Activated naive CD4-positive, alpha-beta T cell treated with anti-CD3 and anti-CD28 coated beads for 36 hours (primary cell): ENCODE measurements at regions of chrX and their contacts with region 1.

Region 1: DNA sequence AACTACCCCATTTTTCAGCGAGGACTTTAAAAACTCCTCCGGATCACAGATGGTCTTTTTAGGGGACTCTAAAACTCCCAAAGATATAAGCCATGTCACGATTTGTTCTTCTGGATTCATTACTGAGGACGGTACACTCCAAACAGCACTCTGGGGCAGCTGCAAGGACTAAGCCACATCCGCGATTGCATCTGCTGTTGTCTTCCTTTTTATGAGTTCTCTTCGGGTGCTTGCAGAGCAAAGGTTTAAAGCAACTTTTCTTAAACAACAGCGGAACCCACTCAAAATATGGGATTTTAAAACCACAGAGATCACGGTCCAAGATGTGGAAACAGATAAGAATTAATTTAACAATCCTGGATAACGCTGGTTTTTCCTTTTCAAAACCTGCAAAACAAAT is at the start of gene ARHGEF6:
- DNase-seq: peak; percentile 54
- H3K4me3 Mint-ChIP-seq: peak within 1 kb of the TSS; percentile 90
- H3K27ac Mint-ChIP-seq: peak within 1 kb of the TSS; percentile 99
- H3K4me1 Mint-ChIP-seq: peaks cover 49% of the 10 kb centered on the region
- H3K27me3 Mint-ChIP-seq: no peaks in the 10 kb centered on the region
- total RNA-seq, gene ARHGEF6: 56.1 to 58.5 TPM

Region 2: DNA sequence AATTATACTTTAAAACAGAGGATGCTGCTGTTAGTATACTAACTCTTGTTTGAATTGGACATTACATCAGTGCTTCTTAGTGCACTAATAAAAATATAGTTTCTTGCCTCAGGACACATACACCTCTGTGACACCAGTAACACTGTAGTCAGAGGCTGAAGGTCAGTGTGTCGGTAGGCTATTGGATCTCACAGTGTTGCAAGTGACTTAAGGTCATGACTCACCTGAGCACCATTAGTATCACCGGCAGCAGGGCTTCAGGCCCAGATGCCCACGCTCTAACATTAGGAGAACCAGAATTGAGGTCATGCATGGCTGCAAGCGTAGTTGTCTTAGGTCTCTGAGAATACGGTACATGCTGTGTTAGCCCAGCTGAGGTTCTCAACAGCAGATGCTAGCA is 1456.3 kb before region 1 on chrX:
- CTCF ChIA-PET with region 1: no interaction called
- intact Hi-C with region 1: no loop called
- DNase-seq: no peak
- H3K4me3 Mint-ChIP-seq: no peak overlapping the region
- H3K27ac Mint-ChIP-seq: no peak overlapping the region
- H3K4me1 Mint-ChIP-seq: no peaks in the 10 kb centered on the region
- H3K27me3 Mint-ChIP-seq: no peaks in the 10 kb centered on the region

Region 3: GRCh38 chrX:136588041-136588788 is 192.5 kb before region 1 on chrX:
- CTCF ChIA-PET with region 1: no interaction called
- intact Hi-C with region 1: loop called (anchors 5 kb)
- DNase-seq: peak; percentile 37
- H3K4me3 Mint-ChIP-seq: no peak overlapping the region
- H3K27ac Mint-ChIP-seq: peak overlapping the region; percentile 86
- H3K4me1 Mint-ChIP-seq: peaks cover 63% of the 10 kb centered on the region
- H3K27me3 Mint-ChIP-seq: no peaks in the 10 kb centered on the region

Region 4: DNA sequence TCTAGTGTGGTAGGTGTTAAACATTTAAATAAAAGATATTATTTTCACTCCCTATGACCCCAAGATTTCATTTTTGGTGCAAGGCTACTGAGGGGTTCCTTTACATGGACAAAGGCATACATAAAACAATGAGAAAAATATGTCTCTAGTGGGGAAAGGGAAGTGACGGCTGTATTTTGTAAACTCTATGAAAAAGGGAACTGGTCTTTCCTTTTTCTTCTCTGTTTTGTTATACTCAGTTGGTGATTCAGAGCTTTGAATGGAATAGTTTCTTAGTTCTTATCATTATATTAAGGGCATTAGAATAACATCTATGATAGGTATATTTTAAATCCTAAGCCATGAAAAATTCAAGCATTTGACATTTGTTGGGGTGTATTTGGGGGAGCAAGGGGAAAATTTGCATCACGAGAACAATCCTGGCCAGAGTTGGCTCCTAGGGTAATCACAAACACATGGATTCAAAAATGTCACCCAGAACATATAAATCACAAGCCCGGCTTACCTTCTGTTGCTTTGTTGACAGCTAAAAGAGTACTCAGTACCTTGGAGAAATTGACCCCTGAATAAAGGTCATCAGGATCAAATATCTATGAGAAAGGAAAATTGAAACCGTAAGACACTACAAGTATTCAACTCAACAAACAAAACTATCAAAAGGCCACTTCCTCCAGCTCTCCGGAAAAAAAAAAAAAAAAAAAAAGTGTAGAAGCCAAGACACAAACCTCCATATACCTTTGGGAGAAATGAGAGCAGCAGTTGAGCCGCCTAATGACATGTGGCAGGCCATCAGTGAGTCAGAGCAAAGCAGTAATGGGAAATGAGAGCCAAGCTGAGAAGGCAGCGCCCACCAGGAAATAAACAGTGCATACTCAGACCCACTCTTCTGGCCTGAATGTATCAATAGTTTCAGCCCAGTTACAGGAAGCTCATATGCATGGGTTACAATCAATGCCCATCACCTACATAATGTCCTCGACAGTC is 33.5 kb before region 1 on chrX:
- CTCF ChIA-PET with region 1: interaction called, 3 read pairs
- intact Hi-C with region 1: loop called (anchors 1 kb)
- DNase-seq: peak; percentile 62
- H3K4me3 Mint-ChIP-seq: peak overlapping the region; percentile 46
- H3K27ac Mint-ChIP-seq: peak overlapping the region; percentile 91
- H3K4me1 Mint-ChIP-seq: peaks cover 90% of the 10 kb centered on the region
- H3K27me3 Mint-ChIP-seq: no peaks in the 10 kb centered on the region

Region 5: DNA sequence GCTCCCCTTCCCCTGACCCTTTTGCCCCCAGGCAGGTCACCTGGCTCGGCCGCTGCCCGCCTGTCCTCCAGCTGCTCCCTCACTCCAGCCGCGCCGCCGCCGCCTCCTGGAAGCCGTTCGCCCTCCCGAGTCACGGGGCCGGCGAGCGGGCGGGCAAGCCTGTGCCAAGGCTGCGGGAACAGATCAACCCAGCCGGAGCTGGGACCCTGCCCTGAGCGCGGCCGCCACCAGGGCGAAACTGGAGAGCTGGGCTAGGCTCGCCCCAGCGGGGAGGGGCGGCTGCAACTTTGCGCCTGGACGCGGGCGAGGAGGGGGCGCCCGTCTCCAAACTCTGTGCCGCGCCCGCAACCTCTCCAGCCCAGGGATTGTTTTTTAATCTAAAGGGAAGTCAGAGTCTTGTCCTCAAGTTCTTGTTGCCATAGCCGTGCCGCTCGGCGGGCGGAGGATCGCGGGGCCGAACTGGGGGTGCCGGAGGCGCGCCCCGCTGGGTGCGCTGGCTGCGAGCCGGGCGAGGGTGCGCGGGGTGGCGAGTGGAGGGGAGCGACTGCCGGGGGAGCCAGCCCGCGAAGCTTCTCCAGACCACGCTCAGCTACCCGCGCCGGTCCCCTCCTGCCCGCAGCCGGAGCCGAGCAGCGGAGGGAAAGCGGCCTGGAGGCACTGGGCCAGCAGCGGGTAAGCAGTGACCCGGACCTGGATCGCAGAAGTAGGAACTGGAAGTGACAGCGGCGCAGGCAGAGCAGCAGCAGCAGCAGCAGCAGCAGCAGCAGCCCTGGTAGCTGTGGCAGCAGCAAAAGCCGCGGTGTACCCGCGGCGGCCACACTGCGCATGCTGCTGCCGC is 13.4 kb before region 1 on chrX:
- CTCF ChIA-PET with region 1: no interaction called
- intact Hi-C with region 1: loop called (anchors 1 kb)
- DNase-seq: peak; percentile 50
- H3K4me3 Mint-ChIP-seq: peak overlapping the region; percentile 76
- H3K27ac Mint-ChIP-seq: peak overlapping the region; percentile 90
- H3K4me1 Mint-ChIP-seq: peaks cover 56% of the 10 kb centered on the region
- H3K27me3 Mint-ChIP-seq: no peaks in the 10 kb centered on the region

Region 6: DNA sequence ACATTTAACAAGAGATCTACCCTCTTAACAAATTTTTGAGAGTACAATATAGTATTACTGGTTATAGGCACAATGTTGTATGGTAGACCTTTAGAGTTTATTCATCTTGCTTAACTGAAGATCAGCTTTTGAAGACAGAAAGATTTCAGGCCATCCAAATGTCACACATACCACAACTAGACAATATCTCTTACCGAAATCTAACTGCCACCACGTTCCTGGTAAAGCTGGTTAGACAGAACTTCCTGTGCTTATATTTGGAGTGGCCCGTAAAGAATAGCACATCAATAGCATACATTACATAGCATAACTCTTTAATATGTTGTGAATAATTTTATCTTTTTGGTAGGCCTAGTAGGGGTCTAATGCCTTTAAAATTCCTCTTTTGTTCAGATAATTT is 29.7 kb after region 1 on chrX:
- CTCF ChIA-PET with region 1: no interaction called
- intact Hi-C with region 1: no loop called
- DNase-seq: no peak
- H3K4me3 Mint-ChIP-seq: no peak overlapping the region
- H3K27ac Mint-ChIP-seq: no peak overlapping the region
- H3K4me1 Mint-ChIP-seq: peaks cover 10% of the 10 kb centered on the region
- H3K27me3 Mint-ChIP-seq: no peaks in the 10 kb centered on the region

Region 7: DNA sequence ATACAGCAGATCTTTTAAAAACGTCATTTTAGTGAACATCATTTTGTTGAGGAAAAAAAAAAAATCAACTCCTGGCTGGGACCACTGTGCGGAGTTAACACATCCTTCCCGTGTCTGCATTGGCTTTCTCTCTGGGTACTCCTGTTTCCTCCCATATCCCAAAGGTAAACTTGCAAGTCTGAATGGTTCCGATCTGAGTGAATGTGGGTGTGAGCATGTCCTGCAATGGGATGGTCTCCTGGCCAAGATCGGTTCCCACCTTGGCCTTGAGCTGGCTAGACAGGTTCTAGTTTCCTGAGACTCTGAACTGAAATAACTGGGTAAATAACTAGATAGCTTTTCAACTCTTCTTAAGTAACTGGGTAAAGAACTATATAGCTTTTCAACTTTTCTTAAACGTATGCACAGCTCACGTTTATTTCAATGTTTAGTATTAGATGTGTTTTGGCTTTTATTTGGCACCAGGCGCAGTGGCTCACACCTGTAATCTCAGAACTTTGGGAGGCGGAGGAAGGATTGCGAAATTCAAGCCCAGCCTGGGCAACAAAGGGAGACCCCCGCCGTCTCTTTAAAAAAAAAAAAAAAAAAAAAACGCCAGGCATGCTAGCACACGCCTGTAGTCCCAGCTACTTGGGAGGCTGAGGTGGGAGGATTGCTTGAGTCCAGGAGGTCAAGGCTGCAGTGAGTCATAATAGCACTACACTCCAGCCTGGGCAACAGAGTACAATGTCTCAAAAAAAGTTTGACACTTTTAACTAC is 85.8 kb after region 1 on chrX:
- CTCF ChIA-PET with region 1: no interaction called
- intact Hi-C with region 1: loop called (anchors 2 kb)
- DNase-seq: no peak
- H3K4me3 Mint-ChIP-seq: peak overlapping the region; percentile 32
- H3K27ac Mint-ChIP-seq: peak overlapping the region; percentile 87
- H3K4me1 Mint-ChIP-seq: peaks cover 52% of the 10 kb centered on the region
- H3K27me3 Mint-ChIP-seq: no peaks in the 10 kb centered on the region

Region 8: DNA sequence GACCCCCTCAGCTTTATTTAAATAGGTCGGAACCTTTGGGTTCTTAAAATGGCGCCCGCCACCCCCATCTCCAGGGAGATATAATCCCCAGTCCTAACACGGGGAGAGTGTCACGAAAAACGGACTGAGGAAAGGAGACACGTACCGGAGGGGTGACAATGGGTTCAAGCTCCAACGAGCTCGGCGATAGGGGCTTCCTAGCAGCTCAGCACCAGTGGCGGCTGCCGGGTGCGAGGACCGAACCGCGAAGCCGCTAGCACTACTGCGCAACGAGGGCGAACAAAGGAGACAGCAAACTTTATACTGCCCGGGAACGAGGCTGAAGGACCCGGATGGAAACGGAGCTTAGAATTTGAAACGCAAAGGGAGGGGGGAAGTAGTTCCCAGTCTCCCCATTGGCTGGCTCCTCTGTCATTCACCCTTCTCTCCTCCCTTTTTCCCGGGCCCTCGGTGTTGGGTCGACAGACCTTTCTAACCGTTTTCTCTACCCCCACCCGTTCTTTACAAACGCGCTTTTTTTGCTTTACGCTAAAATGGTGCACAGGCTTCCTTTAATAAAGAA is 99.8 kb after region 1 on chrX and contains the start of gene RBMX:
- CTCF ChIA-PET with region 1: no interaction called
- intact Hi-C with region 1: loop called (anchors 1 kb)
- DNase-seq: peak; percentile 94
- H3K4me3 Mint-ChIP-seq: peak within 1 kb of the TSS; percentile 97
- H3K27ac Mint-ChIP-seq: peak within 1 kb of the TSS; percentile 98
- H3K4me1 Mint-ChIP-seq: peaks cover 24% of the 10 kb centered on the region
- H3K27me3 Mint-ChIP-seq: no peaks in the 10 kb centered on the region
- total RNA-seq, gene RBMX: 278 to 280 TPM

Region 9: DNA sequence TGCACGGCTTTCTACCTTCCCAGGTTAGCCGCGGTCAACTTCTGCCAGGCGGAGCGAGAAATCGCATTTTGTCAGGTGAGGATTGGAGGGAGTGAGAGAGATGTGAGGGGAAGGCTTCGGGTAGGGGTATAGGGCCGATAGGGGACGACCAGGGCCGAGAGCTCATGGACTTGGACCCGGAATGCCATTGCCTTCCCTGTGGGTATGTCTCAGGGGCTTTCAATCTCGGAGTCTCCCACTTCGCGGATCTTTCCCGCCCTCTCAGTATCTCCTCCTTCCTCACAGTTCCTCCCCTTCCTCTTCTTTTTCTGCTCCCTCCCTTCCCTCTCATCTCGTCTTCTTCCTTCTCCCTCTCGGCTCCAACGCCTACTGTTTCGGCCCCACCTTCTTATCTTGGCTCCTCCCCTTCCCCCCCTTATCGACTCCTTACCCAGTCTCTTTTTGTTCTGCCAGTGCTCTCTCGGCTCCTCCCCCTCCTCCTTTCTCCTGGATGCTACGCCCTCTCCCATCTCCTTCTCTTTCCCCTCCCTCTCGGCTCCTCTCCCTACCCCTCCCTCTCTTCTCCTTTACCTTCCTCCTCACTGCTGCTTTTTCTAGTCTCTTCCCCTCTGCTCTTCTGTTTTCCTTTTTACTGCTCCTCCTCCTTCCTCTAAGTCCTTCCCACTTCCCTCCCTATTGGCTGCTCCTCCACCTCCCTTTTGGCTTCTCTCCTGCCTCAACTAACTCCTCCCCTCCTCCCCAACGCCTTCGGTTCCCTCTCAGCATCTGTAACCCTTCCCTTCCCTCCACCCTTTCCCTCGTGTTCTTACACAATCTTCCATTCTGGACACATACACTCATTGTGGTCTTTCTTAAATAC is 129.2 kb after region 1 on chrX:
- CTCF ChIA-PET with region 1: interaction called, 3 read pairs
- intact Hi-C with region 1: loop called (anchors 1 kb)
- DNase-seq: peak; percentile 75
- H3K4me3 Mint-ChIP-seq: peak overlapping the region; percentile 89
- H3K27ac Mint-ChIP-seq: peak overlapping the region; percentile 87
- H3K4me1 Mint-ChIP-seq: peaks cover 15% of the 10 kb centered on the region
- H3K27me3 Mint-ChIP-seq: no peaks in the 10 kb centered on the region